B cell (primary cell): ENCODE measurements at regions of chr14 and their contacts with region 1.

Region 1: GRCh38 chr14:51860164-51860824 is at the start of gene GNG2:
- DNase-seq: peak; percentile 87
- ATAC-seq: peak; percentile 96
- H3K4me3 ChIP-seq: peak within 1 kb of the TSS; percentile 77 to 95 (median 86)
- H3K4me3 Mint-ChIP-seq: peak within 1 kb of the TSS; percentile 92
- H3K27ac ChIP-seq: peak within 1 kb of the TSS; percentile 80 to 84
- H3K27ac Mint-ChIP-seq: peak within 1 kb of the TSS; percentile 87
- H3K4me1 ChIP-seq: peaks cover 37 to 46% of the 10 kb centered on the region in 2 donors
- H3K4me1 Mint-ChIP-seq: peaks cover 68% of the 10 kb centered on the region
- H3K27me3 ChIP-seq: no peaks in the 10 kb centered on the region
- H3K27me3 Mint-ChIP-seq: no peaks in the 10 kb centered on the region
- CTCF ChIP-seq: no peak
- total RNA-seq, gene GNG2: 57.6 and 69.8 TPM in 2 replicates

Region 2: DNA sequence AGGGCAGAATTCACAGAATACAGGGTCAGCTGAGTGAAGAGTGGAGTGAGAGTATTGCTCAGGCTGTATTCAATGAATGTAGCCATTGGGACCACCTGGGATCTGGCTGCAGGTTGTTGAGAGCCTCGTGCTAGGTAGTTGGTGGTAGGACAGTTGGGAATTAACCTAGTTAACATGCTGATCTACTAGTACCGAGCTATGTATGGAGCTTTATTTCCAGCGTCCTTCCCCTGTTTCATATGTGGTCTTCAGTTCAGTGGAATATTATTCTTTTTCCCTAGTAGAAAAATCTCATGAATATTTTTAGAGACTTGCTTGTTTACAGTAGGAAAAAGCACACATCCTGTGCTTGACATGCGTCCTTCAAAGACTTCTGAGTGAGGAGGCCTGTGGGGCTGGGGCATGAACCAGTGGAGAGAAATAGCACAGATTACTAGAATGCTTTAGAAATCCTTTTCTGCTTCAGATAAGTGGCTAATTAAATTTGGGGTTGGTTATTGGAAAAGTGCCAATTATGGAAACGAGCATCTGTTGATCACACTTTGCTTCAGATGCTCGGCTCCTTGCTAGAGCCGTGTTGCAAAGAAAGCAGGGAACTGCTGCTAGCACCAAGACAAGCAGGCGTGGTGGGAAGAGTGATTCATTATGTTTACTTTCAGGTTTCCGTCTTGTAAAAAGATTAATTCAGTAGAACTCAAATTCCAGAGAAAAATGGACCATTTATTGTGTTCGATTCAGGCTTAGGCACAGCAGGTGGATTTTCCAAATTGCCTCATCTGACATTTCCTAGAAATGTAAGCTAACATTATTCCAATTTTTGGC is 1913.8 kb before region 1 on chr14:
- CTCF ChIA-PET with region 1: no interaction called
- POLR2A ChIA-PET with region 1: no interaction called
- intact Hi-C with region 1: no loop called
- DNase-seq: no peak
- ATAC-seq: no peak
- H3K4me3 ChIP-seq: no peak overlapping the region
- H3K4me3 Mint-ChIP-seq: no peak overlapping the region
- H3K27ac ChIP-seq: no peak overlapping the region
- H3K27ac Mint-ChIP-seq: peak overlapping the region; percentile 1
- H3K4me1 ChIP-seq: peaks cover 18 to 20% of the 10 kb centered on the region in 2 donors
- H3K4me1 Mint-ChIP-seq: peaks cover 42% of the 10 kb centered on the region
- H3K27me3 ChIP-seq: no peaks in the 10 kb centered on the region
- H3K27me3 Mint-ChIP-seq: no peaks in the 10 kb centered on the region
- CTCF ChIP-seq: no peak

Region 3: GRCh38 chr14:50892255-50892654 is 968.0 kb before region 1 on chr14:
- CTCF ChIA-PET with region 1: no interaction called
- POLR2A ChIA-PET with region 1: no interaction called
- intact Hi-C with region 1: no loop called
- DNase-seq: no peak
- ATAC-seq: no peak
- H3K4me3 ChIP-seq: no peak overlapping the region
- H3K4me3 Mint-ChIP-seq: no peak overlapping the region
- H3K27ac ChIP-seq: no peak overlapping the region
- H3K27ac Mint-ChIP-seq: no peak overlapping the region
- H3K4me1 ChIP-seq: no peaks in the 10 kb centered on the region
- H3K4me1 Mint-ChIP-seq: no peaks in the 10 kb centered on the region
- H3K27me3 ChIP-seq: no peaks in the 10 kb centered on the region
- H3K27me3 Mint-ChIP-seq: peaks cover 11% of the 10 kb centered on the region
- CTCF ChIP-seq: no peak

Region 4: GRCh38 chr14:51780006-51780692 is 80.1 kb before region 1 on chr14:
- CTCF ChIA-PET with region 1: interaction called, 18 read pairs
- POLR2A ChIA-PET with region 1: interaction called, 5 read pairs
- intact Hi-C with region 1: no loop called
- DNase-seq: peak; percentile 80
- ATAC-seq: peak; percentile 80
- H3K4me3 ChIP-seq: no peak overlapping the region
- H3K4me3 Mint-ChIP-seq: no peak overlapping the region
- H3K27ac ChIP-seq: no peak overlapping the region
- H3K27ac Mint-ChIP-seq: no peak overlapping the region
- H3K4me1 ChIP-seq: peaks cover 7 to 11% of the 10 kb centered on the region in 2 donors
- H3K4me1 Mint-ChIP-seq: peaks cover 10% of the 10 kb centered on the region
- H3K27me3 ChIP-seq: peaks cover 0 to 16% (median 4%) of the 10 kb centered on the region in 4 experiments
- H3K27me3 Mint-ChIP-seq: peaks cover 32% of the 10 kb centered on the region
- CTCF ChIP-seq: peak; percentile 90

Region 5: DNA sequence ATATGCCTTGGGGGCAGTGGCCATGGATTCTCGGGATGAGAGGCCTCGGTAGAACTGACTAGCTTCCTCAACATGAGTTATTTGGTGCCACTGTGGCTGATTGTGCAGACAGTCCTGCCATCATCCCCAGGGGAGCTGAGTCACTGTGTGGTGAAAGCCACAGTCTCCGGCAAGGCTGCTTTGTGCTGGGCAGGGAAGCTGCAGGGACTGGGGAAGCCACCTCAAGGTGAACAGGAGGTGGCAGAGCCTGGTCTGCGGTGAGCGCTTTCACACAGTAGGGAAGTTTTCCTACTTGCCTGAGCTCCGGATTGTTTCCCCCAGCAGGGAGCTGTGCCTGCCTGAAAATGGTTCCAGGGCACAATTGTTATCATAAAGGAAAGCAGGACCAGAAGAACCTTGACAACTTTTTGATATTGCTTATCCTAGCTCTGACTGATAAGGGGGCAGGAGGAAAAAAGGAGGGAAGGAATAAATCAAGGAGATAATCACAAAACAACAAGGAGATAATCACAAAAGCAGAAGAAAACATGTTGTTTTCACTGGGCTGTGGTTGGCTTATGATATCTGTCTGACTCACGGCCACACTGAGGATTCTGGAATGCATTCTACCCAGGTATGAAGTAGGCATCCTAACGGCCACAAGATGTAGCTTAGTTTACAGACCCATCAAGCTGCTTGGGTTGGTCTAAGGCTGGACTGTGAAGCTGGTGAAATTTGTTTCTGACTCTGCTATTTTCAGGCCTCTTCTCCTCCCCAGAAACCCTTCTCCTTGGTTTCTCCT is 32.1 kb before region 1 on chr14:
- CTCF ChIA-PET with region 1: interaction called, 8 read pairs
- POLR2A ChIA-PET with region 1: no interaction called
- intact Hi-C with region 1: loop called (anchors 1 kb)
- DNase-seq: peak; percentile 75
- ATAC-seq: peak; percentile 100
- H3K4me3 ChIP-seq: no peak overlapping the region
- H3K4me3 Mint-ChIP-seq: peak overlapping the region; percentile 20
- H3K27ac ChIP-seq: no peak overlapping the region
- H3K27ac Mint-ChIP-seq: peak overlapping the region; percentile 4
- H3K4me1 ChIP-seq: peaks cover 11 to 13% of the 10 kb centered on the region in 2 donors
- H3K4me1 Mint-ChIP-seq: no peaks in the 10 kb centered on the region
- H3K27me3 ChIP-seq: peaks cover 0 to 7% (median 2%) of the 10 kb centered on the region in 4 experiments
- H3K27me3 Mint-ChIP-seq: no peaks in the 10 kb centered on the region
- CTCF ChIP-seq: no peak

Region 6: DNA sequence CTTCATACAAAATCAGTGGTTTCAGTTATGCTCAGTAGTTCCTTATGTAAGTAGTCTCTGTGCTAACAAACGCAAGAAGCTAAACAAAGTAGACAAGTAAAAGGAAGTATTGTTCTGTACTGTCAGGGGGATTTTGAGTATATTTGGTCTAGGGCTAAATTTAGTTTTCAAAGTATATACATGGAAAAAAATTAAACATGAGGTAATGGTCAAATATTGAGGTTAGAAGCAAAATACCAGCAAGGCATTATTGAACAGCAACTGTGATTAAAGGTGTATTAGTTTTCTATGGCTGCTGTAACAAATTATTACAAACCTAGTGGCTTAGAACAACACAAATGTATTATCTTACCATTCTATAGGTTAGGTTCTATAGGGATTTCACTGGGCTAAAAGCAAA is 18.9 kb after region 1 on chr14:
- CTCF ChIA-PET with region 1: interaction called, 3 read pairs
- POLR2A ChIA-PET with region 1: interaction called, 4 read pairs
- intact Hi-C with region 1: loop called (anchors 2 kb)
- DNase-seq: peak; percentile 56
- ATAC-seq: peak; percentile 58
- H3K4me3 ChIP-seq: no peak overlapping the region
- H3K4me3 Mint-ChIP-seq: peak overlapping the region; percentile 32
- H3K27ac ChIP-seq: peak overlapping the region; percentile 62 to 77
- H3K27ac Mint-ChIP-seq: peak overlapping the region; percentile 47
- H3K4me1 ChIP-seq: peaks cover 37 to 45% of the 10 kb centered on the region in 2 donors
- H3K4me1 Mint-ChIP-seq: peaks cover 66% of the 10 kb centered on the region
- H3K27me3 ChIP-seq: no peaks in the 10 kb centered on the region
- H3K27me3 Mint-ChIP-seq: no peaks in the 10 kb centered on the region
- CTCF ChIP-seq: no peak

Region 7: DNA sequence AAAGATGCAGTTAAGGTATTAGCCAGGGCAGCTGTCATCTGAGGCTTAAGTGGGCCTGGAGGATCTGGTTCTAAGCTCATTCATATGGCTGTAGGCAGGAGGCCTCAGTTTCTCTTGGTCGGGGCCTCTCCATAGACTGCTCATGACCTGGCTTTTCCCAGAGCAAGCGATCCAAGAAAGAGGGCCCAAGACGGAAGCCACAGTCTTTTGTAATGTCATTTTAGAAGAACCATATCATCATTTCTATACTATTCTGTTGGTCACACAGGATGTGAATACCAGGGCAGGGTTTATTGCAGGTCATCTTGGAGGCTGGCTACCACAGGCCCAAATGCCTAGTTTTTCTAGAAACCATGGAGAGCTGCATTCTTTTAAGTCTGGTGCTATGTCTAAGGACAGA is 47.8 kb after region 1 on chr14:
- CTCF ChIA-PET with region 1: interaction called, 3 read pairs
- POLR2A ChIA-PET with region 1: interaction called, 3 read pairs
- intact Hi-C with region 1: loop called (anchors 5 kb)
- DNase-seq: no peak
- ATAC-seq: no peak
- H3K4me3 ChIP-seq: no peak overlapping the region
- H3K4me3 Mint-ChIP-seq: no peak overlapping the region
- H3K27ac ChIP-seq: no peak overlapping the region
- H3K27ac Mint-ChIP-seq: no peak overlapping the region
- H3K4me1 ChIP-seq: peaks cover 6 to 14% of the 10 kb centered on the region in 2 donors
- H3K4me1 Mint-ChIP-seq: peaks cover 24% of the 10 kb centered on the region
- H3K27me3 ChIP-seq: no peaks in the 10 kb centered on the region
- H3K27me3 Mint-ChIP-seq: no peaks in the 10 kb centered on the region
- CTCF ChIP-seq: no peak

Region 8: GRCh38 chr14:51929166-51929565 is 68.9 kb after region 1 on chr14:
- CTCF ChIA-PET with region 1: no interaction called
- POLR2A ChIA-PET with region 1: no interaction called
- intact Hi-C with region 1: no loop called
- DNase-seq: no peak
- ATAC-seq: no peak
- H3K4me3 ChIP-seq: no peak overlapping the region
- H3K4me3 Mint-ChIP-seq: no peak overlapping the region
- H3K27ac ChIP-seq: no peak overlapping the region
- H3K27ac Mint-ChIP-seq: no peak overlapping the region
- H3K4me1 ChIP-seq: peaks cover 5 to 7% of the 10 kb centered on the region in 2 donors
- H3K4me1 Mint-ChIP-seq: peaks cover 33% of the 10 kb centered on the region
- H3K27me3 ChIP-seq: no peaks in the 10 kb centered on the region
- H3K27me3 Mint-ChIP-seq: no peaks in the 10 kb centered on the region
- CTCF ChIP-seq: no peak

Region 9: DNA sequence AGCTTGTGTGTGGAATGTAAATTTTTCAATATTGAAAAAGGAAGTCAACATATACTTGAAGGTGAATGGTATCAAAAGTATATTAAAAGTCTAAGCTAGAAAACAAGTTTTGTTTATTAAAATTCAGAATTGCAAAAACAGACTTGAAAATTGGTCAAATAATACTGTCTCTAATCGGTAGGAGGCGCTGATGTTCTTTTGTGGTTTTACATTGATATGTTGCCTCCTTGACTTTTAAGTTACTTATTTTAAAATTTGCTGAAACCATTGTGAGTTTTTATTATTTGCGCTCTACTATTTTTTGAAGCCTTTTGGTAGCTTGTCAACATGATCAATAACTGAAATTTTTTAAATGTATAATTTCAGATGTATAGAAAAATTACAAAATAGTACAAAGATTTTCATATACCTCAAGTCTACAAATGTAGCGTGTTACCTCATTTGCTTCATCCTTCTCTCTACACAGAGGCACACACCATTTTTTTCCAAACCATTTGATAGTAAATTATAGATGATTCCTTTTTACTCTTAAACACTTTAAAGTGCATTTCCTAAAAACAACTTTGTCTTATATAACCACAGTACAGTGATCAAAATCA is 136.0 kb after region 1 on chr14:
- CTCF ChIA-PET with region 1: no interaction called
- POLR2A ChIA-PET with region 1: no interaction called
- intact Hi-C with region 1: no loop called
- DNase-seq: peak; percentile 53
- ATAC-seq: no peak
- H3K4me3 ChIP-seq: no peak overlapping the region
- H3K4me3 Mint-ChIP-seq: no peak overlapping the region
- H3K27ac ChIP-seq: no peak overlapping the region
- H3K27ac Mint-ChIP-seq: no peak overlapping the region
- H3K4me1 ChIP-seq: peaks cover 0 to 5% of the 10 kb centered on the region in 2 donors
- H3K4me1 Mint-ChIP-seq: peaks cover 23% of the 10 kb centered on the region
- H3K27me3 ChIP-seq: no peaks in the 10 kb centered on the region
- H3K27me3 Mint-ChIP-seq: no peaks in the 10 kb centered on the region
- CTCF ChIP-seq: peak; percentile 86